Esophagus muscularis mucosa (tissue), 4 donors: ENCODE measurements at regions of chr15 and their contacts with region 1.

Region 1: GRCh38 chr15:57218826-57219576 is 157.3 kb upstream of the CGNL1 start:
- DNase-seq: no peak
- H3K4me3 ChIP-seq: peak overlapping the region in 1 of 4 donors; percentile 20
- H3K27ac ChIP-seq: no peak overlapping the region
- H3K4me1 ChIP-seq: peaks cover 21 to 75% (median 56%) of the 10 kb centered on the region in 4 donors
- H3K27me3 ChIP-seq: no peaks in the 10 kb centered on the region
- CTCF ChIP-seq: no peak
- EP300 ChIP-seq: no peak
- POLR2A ChIP-seq: no peak

Region 2: DNA sequence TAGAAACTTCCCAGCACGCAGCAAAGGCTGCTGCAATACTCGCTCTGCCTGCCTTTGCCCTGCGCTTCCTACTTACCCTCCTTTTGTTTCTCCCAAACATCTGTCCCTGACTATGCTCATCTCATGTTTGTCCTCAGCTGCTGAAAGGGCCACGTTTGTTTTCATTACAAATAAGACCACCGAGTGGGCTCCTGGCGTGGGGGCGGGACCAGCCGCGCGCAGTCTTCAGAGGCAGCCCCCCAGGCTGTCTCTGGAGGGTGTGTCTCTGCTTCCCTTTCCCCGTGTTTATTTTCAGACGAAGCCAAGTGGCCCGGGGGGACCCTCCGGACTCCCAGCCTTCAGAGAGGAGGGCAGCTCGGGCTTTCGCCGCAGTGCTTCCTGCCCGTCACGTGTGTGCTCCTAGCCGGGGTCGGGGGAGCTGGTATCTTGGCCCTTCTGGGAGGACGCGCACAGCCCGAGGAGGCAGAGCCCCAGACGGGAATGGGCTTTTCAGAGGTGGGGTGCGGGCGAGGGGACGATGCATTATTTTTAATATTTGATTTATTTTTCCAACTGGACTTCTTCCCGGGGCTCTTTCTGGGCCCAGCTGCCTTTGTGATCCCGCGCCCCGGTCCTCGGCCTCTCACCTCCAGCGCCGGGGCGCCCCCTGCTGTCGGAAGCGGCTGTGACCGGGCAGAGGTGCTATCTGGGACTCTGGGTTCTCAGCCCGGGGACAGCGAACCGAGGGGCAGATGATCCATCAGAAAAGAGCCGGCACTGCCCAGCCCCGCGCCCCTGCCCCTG is 87.4 kb after region 1 on chr15:
- intact Hi-C with region 1: loop called (anchors 5 kb)
- DNase-seq: peak; percentile 97
- H3K4me3 ChIP-seq: peak overlapping the region; percentile 52 to 69 (median 64)
- H3K27ac ChIP-seq: peak overlapping the region in 2 of 4 donors; percentile 2 to 43
- H3K4me1 ChIP-seq: peaks cover 6 to 21% (median 16%) of the 10 kb centered on the region in 4 donors
- H3K27me3 ChIP-seq: no peaks in the 10 kb centered on the region
- CTCF ChIP-seq: peak; percentile 76 to 90 (median 85)
- EP300 ChIP-seq: no peak
- POLR2A ChIP-seq: no peak